Right ventricle myocardium inferior (tissue), 1 donor: ENCODE measurements at regions of chr10 and their contacts with region 1.

Region 1: GRCh38 chr10:101782811-101783735 is at the start of gene NPM3:
- DNase-seq: peak; percentile 92
- ATAC-seq: peak; percentile 69
- total RNA-seq, gene NPM3: 7.9 TPM

Region 2: DNA sequence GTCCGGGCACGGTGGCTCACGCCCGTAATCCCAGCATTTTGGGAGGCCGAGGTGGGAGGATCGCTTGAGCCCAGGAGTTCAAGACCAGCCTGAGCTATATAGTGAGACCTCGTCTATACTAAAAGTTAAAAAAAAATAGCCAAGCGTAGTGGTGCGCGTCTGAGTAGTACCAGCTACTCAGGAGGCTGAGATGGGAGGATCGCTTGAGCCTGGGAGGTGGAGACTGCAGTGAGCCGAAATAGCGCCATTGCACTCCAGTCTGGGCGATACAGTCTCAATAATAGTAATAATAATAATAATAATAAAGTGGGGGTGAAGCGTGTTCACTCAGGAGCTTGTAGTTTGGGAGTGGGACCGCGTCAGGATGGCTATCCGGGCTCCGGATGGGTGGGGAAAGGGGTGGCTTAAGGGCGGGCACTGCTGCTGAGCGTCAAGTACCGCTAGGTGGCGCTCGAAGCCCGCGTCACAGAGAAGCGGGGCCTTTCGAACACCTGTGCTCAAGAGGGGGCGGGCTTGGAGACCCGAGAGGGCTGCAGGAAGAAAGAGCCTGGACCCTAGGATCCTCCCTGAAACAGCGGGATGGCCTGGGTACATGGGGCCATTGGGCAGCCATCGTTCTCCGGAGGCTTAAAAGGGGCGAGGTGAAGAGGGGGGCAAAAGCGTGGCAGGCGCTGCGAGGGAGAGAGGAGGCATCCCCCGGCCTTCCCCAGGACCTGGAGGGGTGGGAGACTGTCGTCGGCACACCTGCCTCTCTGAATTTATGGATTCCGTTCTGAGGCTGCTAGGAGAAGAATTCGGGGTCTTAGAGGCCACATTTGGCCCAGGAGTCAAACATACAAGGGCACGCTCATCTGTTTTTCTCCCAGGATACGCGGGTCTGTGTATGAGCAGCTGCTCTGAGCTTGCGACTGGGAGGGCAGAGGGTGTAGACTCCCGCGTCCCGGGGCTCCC is 568.4 kb before region 1 on chr10:
- intact Hi-C with region 1: loop called (anchors 5 kb)
- DNase-seq: no peak
- ATAC-seq: peak; percentile 77

Region 3: GRCh38 chr10:101602761-101603398 is 180.2 kb before region 1 on chr10:
- intact Hi-C with region 1: loop called (anchors 1 kb)
- DNase-seq: peak; percentile 82
- ATAC-seq: peak; percentile 80

Region 4: DNA sequence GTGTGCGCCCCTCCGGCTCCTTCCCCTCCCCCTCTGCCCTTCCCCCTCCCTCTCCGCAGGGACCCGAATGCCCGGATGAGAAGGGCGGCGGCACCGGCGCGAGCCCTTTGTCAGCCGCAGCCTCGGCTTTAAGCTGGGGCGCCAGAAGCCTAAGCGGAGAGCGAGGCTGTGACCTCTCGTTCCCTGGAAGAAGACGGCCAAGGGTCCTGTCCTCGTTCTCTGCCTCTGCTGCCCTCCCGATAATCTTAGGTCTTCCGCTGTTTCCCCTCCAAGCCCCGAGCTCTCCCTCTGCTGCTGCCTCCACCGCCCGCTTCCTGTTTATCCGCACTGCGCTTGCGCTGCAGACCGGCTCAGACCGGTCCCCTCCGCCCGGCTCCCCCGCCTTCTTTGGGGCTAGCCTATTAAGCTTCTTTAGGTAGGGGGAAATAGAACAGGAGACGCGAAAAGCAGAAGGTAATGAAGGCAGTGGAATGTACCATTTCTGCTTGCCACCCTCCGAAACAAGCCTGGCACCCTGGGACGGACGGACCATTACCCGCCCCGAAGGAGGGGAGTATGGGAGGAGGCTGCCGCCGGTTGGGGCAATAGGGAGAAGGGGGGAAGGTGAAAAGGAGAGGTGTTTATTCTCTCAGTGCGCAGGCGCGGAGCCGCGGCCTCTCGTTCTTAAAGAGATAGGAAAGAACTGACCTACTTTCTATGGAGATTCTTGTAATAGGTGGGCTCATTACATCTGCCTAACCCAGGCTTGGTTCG is 35.2 kb after region 1 on chr10 and contains the start of gene OGA:
- intact Hi-C with region 1: loop called (anchors 5 kb)
- DNase-seq: peak; percentile 99
- ATAC-seq: peak; percentile 97
- total RNA-seq, gene OGA: 79.2 TPM